Activated CD4-positive, alpha-beta T cell treated with anti-CD3 and anti-CD28 coated beads for 36 hours (primary cell): ENCODE measurements at regions of chr1 and their contacts with region 1.

Region 1: DNA sequence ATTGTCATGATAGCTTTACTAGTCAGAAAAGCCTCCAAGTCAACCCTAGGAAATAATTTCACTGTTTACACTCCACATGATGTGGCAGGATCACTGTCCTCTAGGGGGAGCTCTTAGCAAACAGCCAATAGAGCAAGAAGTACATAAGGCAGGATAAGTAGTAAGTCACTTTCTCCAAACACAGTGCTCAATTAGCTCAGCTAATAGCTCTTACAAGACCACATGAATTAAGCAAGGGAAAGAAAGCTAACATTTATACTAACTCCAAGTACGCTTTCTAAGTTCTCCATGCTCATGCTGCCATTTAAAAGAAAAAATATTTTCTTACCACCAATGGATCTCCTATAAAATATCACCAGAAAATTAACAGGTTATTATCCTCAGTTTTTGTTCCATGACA is 66.9 kb upstream of the LRIF1 start:
- DNase-seq: peak; percentile 69
- ATAC-seq: peak; percentile 80
- H3K4me3 Mint-ChIP-seq: no peak overlapping the region
- H3K27ac Mint-ChIP-seq: no peak overlapping the region
- H3K4me1 Mint-ChIP-seq: no peaks in the 10 kb centered on the region
- H3K27me3 Mint-ChIP-seq: peaks cover 5% of the 10 kb centered on the region

Region 2: GRCh38 chr1:110787328-110788071 is 243.1 kb before region 1 on chr1:
- CTCF ChIA-PET with region 1: interaction called, 38 read pairs
- POLR2A ChIA-PET with region 1: no interaction called
- intact Hi-C with region 1: loop called (anchors 1 to 5 kb)
- DNase-seq: peak; percentile 33
- ATAC-seq: peak; percentile 35
- H3K4me3 Mint-ChIP-seq: peak overlapping the region; percentile 9
- H3K27ac Mint-ChIP-seq: peak overlapping the region; percentile 87
- H3K4me1 Mint-ChIP-seq: peaks cover 60% of the 10 kb centered on the region
- H3K27me3 Mint-ChIP-seq: no peaks in the 10 kb centered on the region

Region 3: DNA sequence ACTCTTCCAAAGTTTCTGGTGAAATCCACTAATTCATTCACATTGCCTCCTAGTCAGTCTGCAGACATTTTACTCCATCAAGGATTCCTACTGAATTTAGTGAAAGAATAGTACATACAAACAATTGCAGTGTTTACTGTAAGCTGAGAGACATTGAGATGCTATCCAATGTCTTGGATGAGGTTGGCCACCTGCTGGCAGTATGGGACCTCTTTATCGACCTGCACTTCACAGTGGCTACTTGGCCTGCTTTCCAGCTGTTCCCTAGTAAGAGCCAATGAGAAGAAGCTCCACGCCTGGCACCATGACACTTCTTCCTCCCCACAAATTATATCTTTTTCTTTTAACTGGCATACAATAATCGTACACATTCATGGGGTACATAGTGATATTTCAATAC is 15.4 kb before region 1 on chr1:
- CTCF ChIA-PET with region 1: interaction called, 24 read pairs
- POLR2A ChIA-PET with region 1: no interaction called
- intact Hi-C with region 1: no loop called
- DNase-seq: no peak
- ATAC-seq: no peak
- H3K4me3 Mint-ChIP-seq: no peak overlapping the region
- H3K27ac Mint-ChIP-seq: no peak overlapping the region
- H3K4me1 Mint-ChIP-seq: no peaks in the 10 kb centered on the region
- H3K27me3 Mint-ChIP-seq: peaks cover 21% of the 10 kb centered on the region

Region 4: GRCh38 chr1:111045033-111045722 is 14.6 kb after region 1 on chr1:
- CTCF ChIA-PET with region 1: interaction called, 27 read pairs
- POLR2A ChIA-PET with region 1: no interaction called
- intact Hi-C with region 1: no loop called
- DNase-seq: no peak
- ATAC-seq: peak; percentile 57
- H3K4me3 Mint-ChIP-seq: no peak overlapping the region
- H3K27ac Mint-ChIP-seq: no peak overlapping the region
- H3K4me1 Mint-ChIP-seq: no peaks in the 10 kb centered on the region
- H3K27me3 Mint-ChIP-seq: peaks cover 12% of the 10 kb centered on the region

Region 5: GRCh38 chr1:111157431-111157830 is 126.8 kb after region 1 on chr1:
- CTCF ChIA-PET with region 1: no interaction called
- POLR2A ChIA-PET with region 1: no interaction called
- intact Hi-C with region 1: no loop called
- DNase-seq: no peak
- ATAC-seq: no peak
- H3K4me3 Mint-ChIP-seq: no peak overlapping the region
- H3K27ac Mint-ChIP-seq: no peak overlapping the region
- H3K4me1 Mint-ChIP-seq: peaks cover 36% of the 10 kb centered on the region
- H3K27me3 Mint-ChIP-seq: no peaks in the 10 kb centered on the region

Region 6: DNA sequence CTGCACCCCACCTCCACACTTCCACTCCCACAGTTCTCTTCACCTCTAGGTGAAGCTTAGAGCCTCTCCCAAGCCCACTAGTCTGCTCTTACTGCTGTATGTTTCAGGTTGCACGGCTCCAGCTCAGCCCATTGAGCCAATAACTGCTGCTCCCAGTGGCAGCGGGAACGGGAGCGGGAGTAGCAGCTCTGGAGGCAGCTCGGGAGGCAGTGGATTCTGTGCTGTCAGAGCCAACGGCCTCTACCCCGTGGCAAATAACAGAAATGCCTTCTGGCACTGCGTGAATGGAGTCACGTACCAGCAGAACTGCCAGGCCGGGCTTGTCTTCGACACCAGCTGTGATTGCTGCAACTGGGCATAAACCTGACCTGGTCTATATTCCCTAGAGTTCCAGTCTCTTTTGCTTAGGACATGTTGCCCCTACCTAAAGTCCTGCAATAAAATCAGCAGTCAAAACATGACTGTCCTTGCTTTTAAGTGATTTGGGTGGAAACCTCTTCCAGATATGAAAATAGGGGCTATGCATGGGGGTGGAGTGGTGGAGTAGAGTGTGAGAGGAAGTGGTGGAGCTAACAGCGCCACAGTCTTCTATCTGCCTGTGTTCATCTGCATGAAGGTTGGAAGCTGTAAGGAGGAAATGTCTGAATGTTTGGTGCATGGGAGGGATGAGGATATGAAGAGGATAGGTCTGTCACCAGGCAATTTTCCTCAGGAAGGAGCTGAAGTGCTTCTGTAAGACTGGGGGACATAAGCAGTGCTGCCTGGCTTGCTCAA is 289.7 kb after region 1 on chr1:
- CTCF ChIA-PET with region 1: no interaction called
- POLR2A ChIA-PET with region 1: no interaction called
- intact Hi-C with region 1: no loop called
- DNase-seq: no peak
- ATAC-seq: peak; percentile 30
- H3K4me3 Mint-ChIP-seq: no peak overlapping the region
- H3K27ac Mint-ChIP-seq: no peak overlapping the region
- H3K4me1 Mint-ChIP-seq: peaks cover 10% of the 10 kb centered on the region
- H3K27me3 Mint-ChIP-seq: no peaks in the 10 kb centered on the region

Region 7: GRCh38 chr1:111334169-111334568 is 303.6 kb after region 1 on chr1:
- CTCF ChIA-PET with region 1: interaction called, 8 read pairs
- POLR2A ChIA-PET with region 1: no interaction called
- intact Hi-C with region 1: loop called (anchors 1 to 5 kb)
- DNase-seq: peak; percentile 67
- ATAC-seq: peak; percentile 88
- H3K4me3 Mint-ChIP-seq: no peak overlapping the region
- H3K27ac Mint-ChIP-seq: no peak overlapping the region
- H3K4me1 Mint-ChIP-seq: no peaks in the 10 kb centered on the region
- H3K27me3 Mint-ChIP-seq: no peaks in the 10 kb centered on the region

Region 8: GRCh38 chr1:111399792-111400610 is 369.4 kb after region 1 on chr1:
- CTCF ChIA-PET with region 1: interaction called, 20 read pairs
- POLR2A ChIA-PET with region 1: no interaction called
- intact Hi-C with region 1: loop called (anchors 1 to 5 kb)
- DNase-seq: peak; percentile 65
- ATAC-seq: no peak
- H3K4me3 Mint-ChIP-seq: no peak overlapping the region
- H3K27ac Mint-ChIP-seq: no peak overlapping the region
- H3K4me1 Mint-ChIP-seq: peaks cover 34% of the 10 kb centered on the region
- H3K27me3 Mint-ChIP-seq: no peaks in the 10 kb centered on the region